Activated CD4-positive, alpha-beta T cell treated with anti-CD3 and anti-CD28 coated beads, Interleukin-2, amount 10 ng/mL, durations not matched to agents 24 days and 14 days (primary cell): ENCODE measurements at regions of chr11 and their contacts with region 1.

Region 1: DNA sequence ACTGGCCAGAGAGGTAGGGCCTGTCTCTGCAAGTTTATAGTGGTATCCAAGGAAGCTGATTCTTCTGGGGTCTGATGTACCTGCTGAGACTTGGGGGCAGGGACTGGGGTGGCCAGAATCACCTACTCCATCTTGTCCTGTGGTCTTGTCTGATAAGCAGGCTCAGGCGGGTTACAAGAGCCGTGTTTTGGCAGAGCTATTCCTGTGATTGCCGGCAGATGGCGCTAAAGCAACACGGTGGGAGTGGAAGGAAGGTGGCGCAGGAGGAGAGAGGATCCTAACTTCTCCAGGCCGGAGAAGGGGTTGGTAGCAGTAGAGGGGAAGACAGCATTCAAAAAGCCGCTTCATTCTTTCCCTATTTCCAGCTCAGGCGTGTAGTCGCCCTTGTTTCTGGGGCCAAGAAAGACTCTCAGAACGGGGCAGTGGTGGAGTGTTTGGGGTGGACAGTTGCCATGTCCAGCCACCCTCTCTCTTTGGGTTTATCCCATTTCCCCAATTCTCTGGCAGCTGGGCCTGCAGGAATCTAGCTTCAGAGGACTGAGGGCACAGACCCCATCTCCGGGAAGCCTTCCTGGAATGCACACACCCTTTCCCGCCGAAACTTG is 15.1 kb downstream of the CHRM1 start:
- DNase-seq: peak; percentile 94
- H3K4me3 Mint-ChIP-seq: no peak overlapping the region
- H3K27ac Mint-ChIP-seq: no peak overlapping the region
- H3K4me1 Mint-ChIP-seq: peaks cover 24% of the 10 kb centered on the region
- H3K27me3 Mint-ChIP-seq: peaks cover 18% of the 10 kb centered on the region

Region 2: GRCh38 chr11:62974848-62975522 is 69.0 kb after region 1 on chr11:
- intact Hi-C with region 1: loop called (anchors 1 kb)
- DNase-seq: peak; percentile 63
- H3K4me3 Mint-ChIP-seq: no peak overlapping the region
- H3K27ac Mint-ChIP-seq: no peak overlapping the region
- H3K4me1 Mint-ChIP-seq: no peaks in the 10 kb centered on the region
- H3K27me3 Mint-ChIP-seq: peaks cover 5% of the 10 kb centered on the region

Region 3: GRCh38 chr11:63023841-63024648 is 118.0 kb after region 1 on chr11:
- intact Hi-C with region 1: loop called (anchors 1 kb)
- DNase-seq: peak; percentile 95
- H3K4me3 Mint-ChIP-seq: no peak overlapping the region
- H3K27ac Mint-ChIP-seq: no peak overlapping the region
- H3K4me1 Mint-ChIP-seq: peaks cover 4% of the 10 kb centered on the region
- H3K27me3 Mint-ChIP-seq: peaks cover 7% of the 10 kb centered on the region

Region 4: GRCh38 chr11:63212742-63213141 is 306.7 kb after region 1 on chr11:
- intact Hi-C with region 1: loop called (anchors 5 kb)
- DNase-seq: peak; percentile 68
- H3K4me3 Mint-ChIP-seq: no peak overlapping the region
- H3K27ac Mint-ChIP-seq: no peak overlapping the region
- H3K4me1 Mint-ChIP-seq: no peaks in the 10 kb centered on the region
- H3K27me3 Mint-ChIP-seq: peaks cover 9% of the 10 kb centered on the region